ENCODE measurements at regions of chr16 and their contacts with region 1.

Region 1: DNA sequence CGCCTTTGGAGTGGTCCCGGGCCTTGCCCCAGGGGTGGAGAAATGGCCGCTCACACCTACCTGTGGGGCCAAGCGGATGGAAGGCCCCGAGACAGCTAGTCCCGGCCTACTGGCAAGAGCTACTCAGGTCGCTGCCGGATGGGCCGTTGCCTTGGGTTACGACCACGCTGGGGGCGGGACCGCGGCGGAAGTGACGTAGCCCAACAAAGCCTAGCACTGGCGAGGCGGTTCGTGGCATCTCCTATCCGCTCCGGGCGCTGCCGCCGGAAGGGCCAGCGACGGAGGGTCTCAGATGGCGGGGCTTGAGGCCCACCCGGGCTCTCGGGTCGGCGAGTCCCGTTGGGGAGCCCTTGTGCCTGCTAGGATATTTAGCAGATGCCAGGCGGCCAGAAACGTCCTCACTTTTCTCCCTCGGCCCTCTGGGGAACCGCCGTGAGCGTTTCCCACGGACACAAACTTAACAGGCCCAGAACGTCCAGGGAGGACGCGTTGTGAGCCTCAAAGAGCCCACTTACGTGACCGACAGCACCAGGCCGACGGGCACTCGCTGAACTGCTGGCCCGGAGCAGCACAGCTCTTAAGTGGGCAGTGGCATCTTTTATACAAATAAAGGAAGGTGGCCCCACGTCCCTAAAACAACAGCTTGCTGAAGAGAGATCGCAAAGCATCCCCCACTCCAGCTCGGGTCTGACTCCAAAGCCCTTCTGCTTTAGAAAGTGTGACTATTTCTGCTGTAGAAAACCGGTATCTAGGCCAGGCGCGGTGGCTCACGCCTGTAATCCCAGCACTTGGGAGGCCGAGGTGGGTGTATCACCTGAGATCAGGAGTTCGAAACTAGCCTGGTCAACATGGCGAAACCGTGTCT is at the start of gene C16orf46:
- DNase-seq: peak; percentile 93 to 99
- H3K4me3 ChIP-seq: peak within 1 kb of the TSS; percentile 72 to 91
- H3K27ac ChIP-seq: peak within 1 kb of the TSS; percentile 96 to 99
- H3K4me1 ChIP-seq: peaks cover 0 to 4% of the 10 kb centered on the region in 2 donors
- H3K27me3 ChIP-seq: no peaks in the 10 kb centered on the region
- CTCF ChIP-seq: no peak
- total RNA-seq, gene C16orf46: not detected

Region 2: DNA sequence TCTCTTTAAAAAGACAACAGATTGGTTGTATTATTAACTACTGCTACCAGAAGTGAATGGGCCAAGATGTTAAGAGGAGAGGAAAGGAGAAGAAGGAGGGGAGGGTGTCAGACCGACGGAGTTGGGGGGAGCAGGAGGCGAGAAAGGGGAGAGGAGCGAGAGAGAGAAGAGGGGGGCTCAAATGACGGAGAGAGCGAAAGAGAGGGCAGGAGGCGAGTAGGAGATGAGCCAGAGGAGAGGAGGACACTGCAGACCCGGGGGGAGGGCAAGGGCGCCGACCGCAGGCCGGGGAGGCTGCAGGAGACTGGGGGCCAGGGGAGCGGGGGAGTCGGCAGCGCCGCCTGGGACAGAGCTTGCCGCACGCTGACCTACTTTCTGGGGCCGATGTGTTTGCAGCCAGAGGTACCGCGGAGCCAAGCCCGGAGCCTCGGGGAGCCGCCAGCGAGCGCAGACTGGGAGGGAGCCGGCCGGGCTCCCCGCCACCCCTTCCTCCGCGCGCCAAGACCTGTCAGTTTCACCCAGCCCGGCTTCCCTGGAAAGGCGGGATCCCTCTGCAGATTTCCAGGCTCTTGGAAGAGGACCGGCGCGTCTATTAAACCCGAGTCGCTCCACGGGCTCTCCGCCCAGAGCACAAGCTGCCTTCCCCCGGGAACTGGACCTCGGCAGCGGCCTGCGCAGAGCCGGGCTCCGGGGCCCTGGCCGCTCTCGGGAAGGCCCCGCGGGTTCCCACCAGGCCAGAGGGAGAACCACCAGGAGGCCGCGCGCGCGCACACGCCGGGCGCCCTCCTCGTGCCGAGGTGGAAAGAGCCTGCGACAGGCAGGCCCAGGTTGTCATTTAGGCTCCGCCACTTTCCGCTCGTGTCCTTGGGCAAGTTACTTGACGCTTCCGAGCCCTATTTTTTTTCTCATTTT is 145.3 kb before region 1 on chr16:
- intact Hi-C with region 1: loop called (anchors 1 kb)
- DNase-seq: peak in 1 of 2 donors; percentile 69
- H3K4me3 ChIP-seq: peak overlapping the region; percentile 63 to 67
- H3K27ac ChIP-seq: peak overlapping the region; percentile 89 to 94
- H3K4me1 ChIP-seq: peaks cover under 1 to 2% of the 10 kb centered on the region in 2 donors
- H3K27me3 ChIP-seq: no peaks in the 10 kb centered on the region
- CTCF ChIP-seq: peak in 1 of 3 experiments; percentile 4

Region 3: GRCh38 chr16:81095953-81096717 is 18.8 kb after region 1 on chr16 and contains the start of gene GCSH:
- intact Hi-C with region 1: loop called (anchors 1 kb)
- DNase-seq: peak; percentile 97 to 99
- H3K4me3 ChIP-seq: peak within 1 kb of the TSS; percentile 90 to 99
- H3K27ac ChIP-seq: peak within 1 kb of the TSS; percentile 78 to 84
- H3K4me1 ChIP-seq: no peaks in the 10 kb centered on the region
- H3K27me3 ChIP-seq: no peaks in the 10 kb centered on the region
- CTCF ChIP-seq: no peak
- total RNA-seq, gene GCSH: 5.0 TPM

Region 4: DNA sequence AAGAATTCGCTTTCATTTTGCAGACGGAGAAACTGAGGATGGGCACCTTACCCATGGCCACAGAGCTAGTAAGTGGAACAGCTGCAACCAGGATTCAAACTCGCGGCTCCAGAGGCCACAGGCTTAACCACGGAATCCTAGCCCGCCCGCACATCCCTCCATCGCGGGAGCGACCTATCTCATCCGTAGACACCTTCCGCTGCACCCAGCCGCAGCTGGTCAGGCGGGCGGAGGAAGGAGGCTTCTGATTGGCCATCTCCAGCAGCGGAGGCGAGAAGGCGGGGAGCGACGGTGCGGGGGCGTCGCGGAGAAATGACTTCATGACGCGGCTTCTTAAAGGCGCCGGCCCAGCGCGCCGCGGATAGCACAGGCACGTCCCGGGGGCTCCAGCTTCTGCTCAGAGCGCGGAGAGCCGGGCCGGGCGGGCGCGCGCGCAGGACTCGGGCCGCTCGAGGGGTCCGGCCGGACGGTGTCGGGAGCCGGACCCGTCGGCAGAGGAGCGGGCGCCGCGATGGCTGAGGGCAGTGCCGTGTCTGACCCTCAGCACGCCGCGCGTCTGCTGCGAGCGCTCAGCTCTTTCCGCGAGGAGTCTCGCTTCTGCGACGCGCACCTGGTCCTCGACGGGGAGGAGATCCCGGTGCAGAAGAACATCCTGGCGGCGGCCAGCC is 237.4 kb after region 1 on chr16 and contains the start of gene GAN:
- intact Hi-C with region 1: loop called (anchors 2 kb)
- DNase-seq: peak; percentile 88 to 96
- H3K4me3 ChIP-seq: peak within 1 kb of the TSS; percentile 88 to 95
- H3K27ac ChIP-seq: peak within 1 kb of the TSS; percentile 88 to 91
- H3K4me1 ChIP-seq: peaks cover 0 to 16% of the 10 kb centered on the region in 2 donors
- H3K27me3 ChIP-seq: no peaks in the 10 kb centered on the region
- CTCF ChIP-seq: no peak
- total RNA-seq, gene GAN: 2.6 TPM